ENCODE measurements at regions of chr4 and their contacts with region 1.

Region 1: GRCh38 chr4:159446266-159446976 is 343.5 kb downstream of the RAPGEF2 start:
- DNase-seq: peak; percentile 16 to 35
- ATAC-seq: peak; percentile 96 to 100
- H3K4me3 ChIP-seq: no peak overlapping the region
- H3K27ac ChIP-seq: peak overlapping the region in 1 of 4 donors; percentile 13
- H3K4me1 ChIP-seq: peaks cover 0 to 5% of the 10 kb centered on the region in 2 donors
- H3K27me3 ChIP-seq: no peaks in the 10 kb centered on the region
- CTCF ChIP-seq: peak; percentile 62 to 85 (median 79)
- POLR2A ChIP-seq: no peak

Region 2: DNA sequence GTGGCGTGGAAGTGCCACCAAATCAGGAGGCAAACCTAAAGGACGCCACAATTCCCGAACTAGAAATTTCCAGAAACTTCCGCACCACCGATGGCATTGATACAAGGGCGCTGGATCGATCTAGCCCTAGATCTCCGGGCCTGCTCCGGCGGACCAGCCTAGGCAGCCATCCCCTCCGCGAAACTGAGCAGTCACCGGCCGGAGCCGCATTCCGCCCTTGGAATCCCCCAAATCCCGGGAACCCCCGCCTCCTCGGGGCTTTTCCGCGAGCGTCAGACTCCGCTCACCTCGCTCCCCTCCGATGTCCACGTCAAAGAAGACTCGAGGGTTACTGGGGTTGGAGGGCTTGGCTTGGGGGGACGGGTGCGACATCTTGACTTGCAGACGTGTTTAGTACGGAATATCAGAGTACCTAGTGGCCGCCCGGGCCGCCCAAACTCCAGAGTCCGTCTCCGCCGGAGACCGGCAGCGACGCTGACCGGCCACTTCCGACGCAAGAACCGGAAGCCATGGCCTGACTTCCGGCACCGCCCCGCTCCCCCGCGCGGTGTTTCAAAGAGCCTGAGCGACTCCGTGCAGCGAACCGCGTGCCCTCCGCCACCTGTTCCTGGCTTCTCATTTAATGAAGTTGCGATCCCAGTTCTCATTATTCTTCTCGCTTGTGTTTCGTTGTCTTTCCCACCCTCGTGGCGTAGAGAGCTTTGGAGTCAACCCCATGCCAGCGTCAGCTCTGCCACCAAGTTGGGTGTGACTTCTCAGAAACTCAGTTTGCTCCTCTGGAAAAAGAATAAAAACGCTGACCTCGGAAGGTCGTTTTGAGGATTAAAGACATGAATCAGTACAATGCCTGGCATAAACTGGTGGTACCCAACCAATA is 723.3 kb before region 1 on chr4 and contains the start of gene PPID:
- in situ Hi-C with region 1: loop called (anchors 25 kb)
- intact Hi-C with region 1: loop called (anchors 5 kb)
- DNase-seq: peak; percentile 68 to 81
- ATAC-seq: peak; percentile 92 to 95
- H3K4me3 ChIP-seq: peak within 1 kb of the TSS; percentile 72 to 95 (median 94)
- H3K27ac ChIP-seq: peak within 1 kb of the TSS; percentile 90 to 96 (median 92)
- H3K4me1 ChIP-seq: peaks cover 17 to 30% of the 10 kb centered on the region in 2 donors
- H3K27me3 ChIP-seq: no peaks in the 10 kb centered on the region
- CTCF ChIP-seq: no peak
- POLR2A ChIP-seq: peak; percentile 87
- total RNA-seq, gene PPID: 30.1 to 81.8 (median 40.6) TPM

Region 3: GRCh38 chr4:158856852-158857251 is 589.6 kb before region 1 on chr4:
- in situ Hi-C with region 1: loop called (anchors 10 to 25 kb)
- intact Hi-C with region 1: loop called (anchors 5 kb)
- DNase-seq: no peak
- ATAC-seq: peak; percentile 65 to 73
- H3K4me3 ChIP-seq: no peak overlapping the region
- H3K27ac ChIP-seq: no peak overlapping the region
- H3K4me1 ChIP-seq: no peaks in the 10 kb centered on the region
- H3K27me3 ChIP-seq: no peaks in the 10 kb centered on the region
- CTCF ChIP-seq: peak in 4 of 5 experiments; percentile 26 to 51 (median 36)
- POLR2A ChIP-seq: no peak

Region 4: GRCh38 chr4:159206427-159206871 is 240.0 kb before region 1 on chr4:
- in situ Hi-C with region 1: no loop called
- intact Hi-C with region 1: loop called (anchors 2 kb)
- DNase-seq: no peak
- ATAC-seq: no peak
- H3K4me3 ChIP-seq: no peak overlapping the region
- H3K27ac ChIP-seq: peak overlapping the region in 1 of 4 donors; percentile 19
- H3K4me1 ChIP-seq: peaks cover 15 to 46% of the 10 kb centered on the region in 2 donors
- H3K27me3 ChIP-seq: no peaks in the 10 kb centered on the region
- CTCF ChIP-seq: no peak
- POLR2A ChIP-seq: no peak

Region 5: GRCh38 chr4:159778298-159778697 is 331.9 kb after region 1 on chr4:
- in situ Hi-C with region 1: no loop called
- intact Hi-C with region 1: no loop called
- DNase-seq: no peak
- ATAC-seq: no peak
- H3K4me3 ChIP-seq: no peak overlapping the region
- H3K27ac ChIP-seq: no peak overlapping the region
- H3K4me1 ChIP-seq: no peaks in the 10 kb centered on the region
- H3K27me3 ChIP-seq: no peaks in the 10 kb centered on the region
- CTCF ChIP-seq: no peak
- POLR2A ChIP-seq: no peak

Measured in gastrocnemius medialis (tissue), 4 donors.